ENCODE measurements at regions of chr9 and their contacts with region 1.

Region 1: GRCh38 chr9:126704873-126705766 is 91.4 kb downstream of the LMX1B start:
- DNase-seq: peak; percentile 85
- H3K4me3 Mint-ChIP-seq: no peak overlapping the region
- H3K27ac Mint-ChIP-seq: no peak overlapping the region
- H3K4me1 Mint-ChIP-seq: peaks cover 13% of the 10 kb centered on the region
- H3K27me3 Mint-ChIP-seq: peaks cover 26% of the 10 kb centered on the region

Region 2: DNA sequence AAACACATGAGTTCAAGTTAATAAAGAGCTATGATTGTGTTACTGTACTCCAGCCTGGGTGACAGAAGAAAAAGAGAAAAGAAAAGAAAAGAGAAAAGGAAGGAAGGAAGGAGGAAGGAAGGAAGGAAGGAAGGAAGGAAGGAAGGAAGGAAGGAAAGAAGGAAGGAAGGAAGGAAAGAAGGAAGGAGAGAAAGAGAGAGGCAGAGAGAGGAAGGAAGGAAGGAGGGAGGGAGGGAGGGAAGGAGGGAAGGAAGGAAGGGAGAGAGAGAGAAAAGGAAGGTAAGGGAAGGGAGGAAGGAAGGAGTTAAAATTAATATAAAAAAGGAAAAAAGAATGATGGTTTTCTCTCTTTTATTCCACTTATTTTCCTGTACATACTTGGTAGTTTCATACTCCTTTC is 10.3 kb after region 1 on chr9:
- CTCF ChIA-PET with region 1: interaction called, 60 read pairs
- POLR2A ChIA-PET with region 1: interaction called, 7 read pairs
- DNase-seq: no peak
- H3K4me3 Mint-ChIP-seq: no peak overlapping the region
- H3K27ac Mint-ChIP-seq: no peak overlapping the region
- H3K4me1 Mint-ChIP-seq: peaks cover 19% of the 10 kb centered on the region
- H3K27me3 Mint-ChIP-seq: peaks cover 17% of the 10 kb centered on the region

Region 3: DNA sequence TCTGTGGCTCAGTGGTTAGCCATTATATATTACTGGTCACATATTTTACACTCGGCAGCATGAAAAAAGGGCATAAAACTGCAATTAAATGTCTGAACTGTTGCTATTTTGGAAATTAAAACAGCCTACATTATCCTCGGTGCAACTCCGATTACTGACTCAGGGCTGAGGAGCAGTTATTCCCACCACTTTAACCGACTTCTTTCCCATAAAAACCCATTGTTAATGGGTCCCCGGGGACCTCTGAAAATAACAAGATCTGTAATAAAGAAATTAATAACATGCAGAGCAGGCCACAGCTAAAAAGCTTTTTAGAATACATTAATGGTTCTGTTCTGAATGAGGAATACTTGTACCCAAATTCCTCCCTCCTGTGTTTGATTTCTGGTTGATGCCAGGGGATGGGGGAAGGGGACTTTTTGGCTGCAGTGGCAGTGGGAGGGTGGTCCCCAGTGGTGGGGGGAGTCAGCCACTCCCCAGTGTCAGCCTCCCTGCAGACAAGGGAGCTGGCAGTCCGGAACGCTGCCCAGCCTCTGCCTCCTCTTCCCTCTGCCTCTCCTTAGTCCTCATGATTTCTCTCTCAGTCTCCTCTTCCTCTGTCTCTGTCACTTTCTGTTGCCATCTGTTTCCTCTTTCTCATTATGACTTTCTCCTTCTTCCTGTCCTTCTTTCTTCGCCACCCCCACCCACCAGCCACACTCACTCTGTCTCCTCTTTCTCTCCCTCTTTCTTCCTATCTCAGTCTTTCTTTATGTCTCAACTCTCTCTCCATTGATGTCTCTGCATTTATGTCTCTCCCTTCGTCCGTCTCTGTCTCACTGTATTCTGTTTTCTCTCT is 40.7 kb after region 1 on chr9:
- CTCF ChIA-PET with region 1: interaction called, 31 read pairs
- POLR2A ChIA-PET with region 1: no interaction called
- DNase-seq: no peak
- H3K4me3 Mint-ChIP-seq: no peak overlapping the region
- H3K27ac Mint-ChIP-seq: no peak overlapping the region
- H3K4me1 Mint-ChIP-seq: peaks cover 30% of the 10 kb centered on the region
- H3K27me3 Mint-ChIP-seq: peaks cover 31% of the 10 kb centered on the region

Region 4: GRCh38 chr9:126781186-126782052 is 76.3 kb after region 1 on chr9:
- CTCF ChIA-PET with region 1: interaction called, 436 read pairs
- POLR2A ChIA-PET with region 1: interaction called, 19 read pairs
- DNase-seq: peak; percentile 82
- H3K4me3 Mint-ChIP-seq: no peak overlapping the region
- H3K27ac Mint-ChIP-seq: no peak overlapping the region
- H3K4me1 Mint-ChIP-seq: no peaks in the 10 kb centered on the region
- H3K27me3 Mint-ChIP-seq: peaks cover 22% of the 10 kb centered on the region

Region 5: GRCh38 chr9:126804696-126805545 is 99.8 kb after region 1 on chr9 and contains the start of gene ZBTB43:
- CTCF ChIA-PET with region 1: interaction called, 34 read pairs
- POLR2A ChIA-PET with region 1: interaction called, 18 read pairs
- DNase-seq: peak; percentile 99
- H3K4me3 Mint-ChIP-seq: peak within 1 kb of the TSS; percentile 84
- H3K27ac Mint-ChIP-seq: peak within 1 kb of the TSS; percentile 97
- H3K4me1 Mint-ChIP-seq: peaks cover 43% of the 10 kb centered on the region
- H3K27me3 Mint-ChIP-seq: no peaks in the 10 kb centered on the region
- total RNA-seq, gene ZBTB43: 40.8 to 41.0 TPM